Ascending aorta (tissue), 2 donors: ENCODE measurements at regions of chr13 and their contacts with region 1.

Region 1: GRCh38 chr13:31199849-31200636 is at the start of gene B3GLCT:
- DNase-seq: peak in 1 of 2 donors; percentile 88
- H3K4me3 ChIP-seq: peak within 1 kb of the TSS; percentile 88 to 97
- H3K27ac ChIP-seq: peak within 1 kb of the TSS; percentile 88 to 100
- H3K4me1 ChIP-seq: peaks cover 5 to 15% of the 10 kb centered on the region in 2 donors
- H3K27me3 ChIP-seq: no peaks in the 10 kb centered on the region
- CTCF ChIP-seq: peak; percentile 58 to 96 (median 77)
- total RNA-seq, gene B3GLCT: 8.8 TPM

Region 2: DNA sequence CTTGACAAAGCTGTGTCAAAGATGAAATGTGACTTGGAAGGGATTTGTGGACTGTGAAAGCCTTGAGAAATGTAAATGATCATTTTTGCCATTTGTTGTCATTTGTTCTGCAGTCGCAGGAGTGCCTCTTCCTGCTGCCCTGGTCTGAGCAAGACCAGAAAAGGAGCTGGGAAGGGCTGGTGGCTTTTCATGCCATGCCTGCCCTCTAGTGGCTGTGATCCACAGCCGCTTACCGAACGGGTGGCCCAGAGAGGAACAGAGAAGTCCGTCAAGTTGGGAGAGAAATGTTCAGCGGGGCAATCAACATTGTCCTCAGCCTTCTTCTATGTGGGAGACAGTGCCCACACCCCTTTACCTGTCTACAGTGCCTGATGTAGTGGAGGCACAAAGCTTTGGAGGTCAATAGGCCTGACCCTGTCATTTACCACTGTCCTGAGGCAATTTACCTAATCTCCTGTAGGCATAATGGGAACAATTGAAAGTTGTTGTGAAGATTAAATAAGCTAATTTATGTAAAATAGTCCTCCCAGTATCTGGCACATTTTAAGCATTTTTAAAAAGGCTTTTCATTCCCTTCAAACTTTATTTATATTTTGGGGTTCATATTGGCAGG is 224.2 kb after region 1 on chr13:
- intact Hi-C with region 1: loop called (anchors 2 kb)
- DNase-seq: peak; percentile 30 to 83
- H3K4me3 ChIP-seq: no peak overlapping the region
- H3K27ac ChIP-seq: no peak overlapping the region
- H3K4me1 ChIP-seq: no peaks in the 10 kb centered on the region
- H3K27me3 ChIP-seq: no peaks in the 10 kb centered on the region
- CTCF ChIP-seq: peak; percentile 56 to 82 (median 82)

Region 3: GRCh38 chr13:32491028-32491427 is 1291.0 kb after region 1 on chr13:
- intact Hi-C with region 1: no loop called
- DNase-seq: no peak
- H3K4me3 ChIP-seq: no peak overlapping the region
- H3K27ac ChIP-seq: no peak overlapping the region
- H3K4me1 ChIP-seq: no peaks in the 10 kb centered on the region
- H3K27me3 ChIP-seq: no peaks in the 10 kb centered on the region
- CTCF ChIP-seq: no peak